PC-3 (cell line): ENCODE measurements at regions of chr5 and their contacts with region 1.

Region 1: GRCh38 chr5:74766849-74767578 is at the starts of genes GFM2 and NSA2:
- DNase-seq: peak; percentile 90
- ATAC-seq: peak; percentile 77
- H3K4me3 ChIP-seq: peak within 1 kb of the TSS; percentile 97
- H3K27ac ChIP-seq: peak within 1 kb of the TSS; percentile 50
- H3K4me1 ChIP-seq: peaks cover 38% of the 10 kb centered on the region
- H3K27me3 ChIP-seq: no peaks in the 10 kb centered on the region
- CTCF ChIP-seq: no peak
- total RNA-seq, gene GFM2: 18.9 and 36.8 TPM in 2 replicates
- total RNA-seq, gene NSA2: 51.5 and 55.8 TPM in 2 replicates

Region 2: DNA sequence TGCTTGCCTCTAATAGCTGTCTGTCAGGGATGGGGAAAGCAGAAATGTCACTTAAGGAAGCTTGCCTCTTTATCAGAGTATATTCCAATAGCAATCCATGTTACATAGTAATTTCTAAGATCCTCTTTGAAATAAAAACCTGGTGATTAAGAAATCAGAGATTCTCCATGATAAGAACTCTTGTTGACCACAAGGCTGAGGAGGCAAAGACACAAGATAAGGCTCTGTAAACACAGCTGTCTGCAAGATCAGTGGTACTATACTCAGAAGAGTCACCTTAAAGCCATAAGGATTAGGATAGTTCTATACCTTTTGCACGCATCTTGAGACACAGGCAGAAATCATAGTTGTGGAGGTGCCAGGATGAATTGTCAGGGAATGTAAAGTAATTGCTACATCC is 41.7 kb before region 1 on chr5:
- CTCF ChIA-PET with region 1: no interaction called
- POLR2A ChIA-PET with region 1: no interaction called
- intact Hi-C with region 1: loop called (anchors 5 kb)
- DNase-seq: no peak
- ATAC-seq: no peak
- H3K4me3 ChIP-seq: no peak overlapping the region
- H3K27ac ChIP-seq: no peak overlapping the region
- H3K4me1 ChIP-seq: no peaks in the 10 kb centered on the region
- H3K27me3 ChIP-seq: no peaks in the 10 kb centered on the region
- CTCF ChIP-seq: no peak

Region 3: GRCh38 chr5:74862221-74862620 is 95.2 kb after region 1 on chr5:
- CTCF ChIA-PET with region 1: interaction called, 13 read pairs
- POLR2A ChIA-PET with region 1: no interaction called
- intact Hi-C with region 1: no loop called
- DNase-seq: no peak
- ATAC-seq: no peak
- H3K4me3 ChIP-seq: no peak overlapping the region
- H3K27ac ChIP-seq: no peak overlapping the region
- H3K4me1 ChIP-seq: peaks cover 6% of the 10 kb centered on the region; the same call in 1 of the 2 replicates
- H3K27me3 ChIP-seq: no peaks in the 10 kb centered on the region
- CTCF ChIP-seq: no peak

Region 4: GRCh38 chr5:74903165-74903787 is 136.3 kb after region 1 on chr5:
- CTCF ChIA-PET with region 1: no interaction called
- POLR2A ChIA-PET with region 1: no interaction called
- intact Hi-C with region 1: loop called (anchors 5 kb)
- DNase-seq: peak; percentile 64
- ATAC-seq: peak; percentile 96
- H3K4me3 ChIP-seq: no peak overlapping the region
- H3K27ac ChIP-seq: no peak overlapping the region
- H3K4me1 ChIP-seq: no peaks in the 10 kb centered on the region
- H3K27me3 ChIP-seq: no peaks in the 10 kb centered on the region
- CTCF ChIP-seq: peak; percentile 72

Region 5: DNA sequence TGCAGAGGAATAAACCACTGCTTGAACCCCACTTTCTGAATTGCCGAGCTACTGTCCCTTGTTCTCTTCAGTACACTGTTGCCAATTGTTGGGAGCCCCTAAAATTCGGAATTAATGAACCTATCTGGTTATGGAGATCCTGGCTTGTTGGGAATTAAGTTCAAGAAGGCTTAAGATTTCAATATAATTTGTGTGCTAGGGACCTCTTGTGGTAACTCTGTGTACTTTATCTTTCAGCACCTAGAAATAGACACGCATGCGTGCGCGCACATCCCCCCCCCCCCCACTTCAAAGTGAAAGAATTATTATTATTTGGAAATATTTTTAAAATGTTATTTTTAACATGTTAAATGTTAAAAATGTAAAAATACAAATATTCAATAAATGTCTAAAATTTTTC is 152.5 kb after region 1 on chr5:
- CTCF ChIA-PET with region 1: no interaction called
- POLR2A ChIA-PET with region 1: no interaction called
- intact Hi-C with region 1: loop called (anchors 2 kb)
- DNase-seq: peak; percentile 63
- ATAC-seq: no peak; the same call in 1 of the 2 replicates
- H3K4me3 ChIP-seq: no peak overlapping the region
- H3K27ac ChIP-seq: no peak overlapping the region
- H3K4me1 ChIP-seq: peaks cover 8% of the 10 kb centered on the region; the same call in 1 of the 2 replicates
- H3K27me3 ChIP-seq: no peaks in the 10 kb centered on the region
- CTCF ChIP-seq: peak; percentile 50; the same call in 1 of the 2 replicates